Naive thymus-derived CD4-positive, alpha-beta T cell (primary cell): ENCODE measurements at regions of chr19 and their contacts with region 1.

Region 1: DNA sequence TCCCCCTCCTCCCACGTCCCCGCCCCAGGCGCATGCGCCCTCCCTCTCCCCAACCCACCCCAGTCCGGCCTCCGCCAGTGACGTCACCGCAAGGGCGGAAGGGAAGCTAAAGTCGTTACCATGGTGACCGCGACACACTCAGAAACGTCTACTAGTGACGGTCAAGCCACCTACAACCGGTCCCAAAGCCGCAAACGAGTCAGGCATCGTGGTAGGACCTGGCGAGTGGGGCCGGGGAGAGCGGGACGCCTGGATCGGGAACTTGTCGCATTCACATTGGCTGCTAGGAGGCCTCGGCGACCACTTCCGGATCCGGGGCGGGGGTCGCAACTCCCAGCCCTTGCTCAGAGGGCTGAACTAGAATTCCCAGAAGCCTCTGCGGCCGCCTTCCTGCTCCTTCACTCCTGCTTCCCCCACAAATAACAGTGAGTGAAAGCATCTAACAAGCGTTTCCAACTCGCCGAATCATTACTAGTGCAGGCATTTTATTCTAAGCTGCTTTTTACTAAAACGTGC is at the start of gene ZSCAN5A:
- DNase-seq: peak; percentile 93 to 99 (median 99)
- ATAC-seq: peak; percentile 85
- H3K4me3 ChIP-seq: peak within 1 kb of the TSS; percentile 86
- H3K4me3 Mint-ChIP-seq: peak within 1 kb of the TSS; percentile 79 to 100 (median 96)
- H3K27ac ChIP-seq: peak within 1 kb of the TSS; percentile 97
- H3K27ac Mint-ChIP-seq: peak within 1 kb of the TSS; percentile 95 to 100 (median 99)
- H3K4me1 ChIP-seq: peaks cover 4 to 10% of the 10 kb centered on the region in 2 donors
- H3K4me1 Mint-ChIP-seq: peaks cover 13 to 41% (median 26%) of the 10 kb centered on the region in 7 donors
- H3K27me3 ChIP-seq: no peaks in the 10 kb centered on the region
- H3K27me3 Mint-ChIP-seq: no peaks in the 10 kb centered on the region
- total RNA-seq, gene ZSCAN5A: 8.0 to 15.4 (median 11.8) TPM

Region 2: DNA sequence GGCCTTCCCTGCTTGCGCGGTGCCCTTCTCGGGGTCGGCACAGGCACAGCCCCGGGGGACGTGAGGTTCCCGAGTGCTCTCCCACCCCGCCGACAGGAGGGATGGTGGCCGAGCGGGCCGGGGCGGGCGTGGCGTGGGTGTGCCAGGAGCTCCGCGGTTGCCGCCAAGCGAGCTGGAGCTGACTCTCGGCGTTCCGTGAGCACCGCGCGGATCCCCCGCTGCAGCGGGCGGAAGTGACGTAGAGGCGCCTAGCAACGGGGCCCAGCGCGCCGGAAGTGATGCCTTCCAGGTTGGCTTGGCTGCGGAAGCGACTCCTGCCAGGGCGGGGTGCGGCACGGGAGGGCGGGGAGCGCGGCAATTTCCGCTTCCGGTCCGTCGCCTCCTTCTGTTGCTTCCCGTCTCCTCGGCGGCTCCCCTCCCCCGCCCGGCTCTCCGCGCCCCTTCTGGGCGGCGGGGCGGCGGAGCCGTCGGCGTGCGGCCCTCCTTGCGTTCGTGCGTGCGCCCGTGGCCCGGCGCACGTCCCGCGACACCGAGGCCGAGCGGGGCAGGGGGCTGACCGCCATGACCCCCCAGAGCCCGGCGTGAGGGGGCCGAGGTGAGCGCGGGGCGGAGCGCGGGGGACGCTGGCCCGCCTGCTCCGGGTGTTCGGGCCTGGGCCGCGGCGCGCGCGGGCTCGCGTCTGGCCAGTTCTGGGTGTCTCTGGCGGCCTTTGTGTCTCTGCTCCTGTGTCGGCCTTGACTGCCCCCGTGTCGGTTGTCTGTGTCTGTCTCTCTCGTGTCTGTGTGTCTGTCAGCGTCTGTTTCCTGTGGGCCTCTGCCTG is 639.6 kb before region 1 on chr19 and contains the start of gene EPN1:
- CTCF ChIA-PET with region 1: no interaction called
- POLR2A ChIA-PET with region 1: no interaction called
- intact Hi-C with region 1: loop called in 1 of 2 experiments (anchors 1 kb)
- DNase-seq: peak; percentile 88 to 98 (median 96)
- ATAC-seq: peak; percentile 93
- H3K4me3 ChIP-seq: peak within 1 kb of the TSS; percentile 72
- H3K4me3 Mint-ChIP-seq: peak within 1 kb of the TSS; percentile 89 to 99 (median 97)
- H3K27ac ChIP-seq: peak within 1 kb of the TSS; percentile 84
- H3K27ac Mint-ChIP-seq: peak within 1 kb of the TSS; percentile 90 to 99 (median 96)
- H3K4me1 ChIP-seq: peaks cover 26 to 28% of the 10 kb centered on the region in 2 donors
- H3K4me1 Mint-ChIP-seq: peaks cover 49 to 72% (median 58%) of the 10 kb centered on the region in 7 donors
- H3K27me3 ChIP-seq: no peaks in the 10 kb centered on the region
- H3K27me3 Mint-ChIP-seq: no peaks in the 10 kb centered on the region
- total RNA-seq, gene EPN1: 45.2 to 67.1 (median 52.2) TPM

Region 3: DNA sequence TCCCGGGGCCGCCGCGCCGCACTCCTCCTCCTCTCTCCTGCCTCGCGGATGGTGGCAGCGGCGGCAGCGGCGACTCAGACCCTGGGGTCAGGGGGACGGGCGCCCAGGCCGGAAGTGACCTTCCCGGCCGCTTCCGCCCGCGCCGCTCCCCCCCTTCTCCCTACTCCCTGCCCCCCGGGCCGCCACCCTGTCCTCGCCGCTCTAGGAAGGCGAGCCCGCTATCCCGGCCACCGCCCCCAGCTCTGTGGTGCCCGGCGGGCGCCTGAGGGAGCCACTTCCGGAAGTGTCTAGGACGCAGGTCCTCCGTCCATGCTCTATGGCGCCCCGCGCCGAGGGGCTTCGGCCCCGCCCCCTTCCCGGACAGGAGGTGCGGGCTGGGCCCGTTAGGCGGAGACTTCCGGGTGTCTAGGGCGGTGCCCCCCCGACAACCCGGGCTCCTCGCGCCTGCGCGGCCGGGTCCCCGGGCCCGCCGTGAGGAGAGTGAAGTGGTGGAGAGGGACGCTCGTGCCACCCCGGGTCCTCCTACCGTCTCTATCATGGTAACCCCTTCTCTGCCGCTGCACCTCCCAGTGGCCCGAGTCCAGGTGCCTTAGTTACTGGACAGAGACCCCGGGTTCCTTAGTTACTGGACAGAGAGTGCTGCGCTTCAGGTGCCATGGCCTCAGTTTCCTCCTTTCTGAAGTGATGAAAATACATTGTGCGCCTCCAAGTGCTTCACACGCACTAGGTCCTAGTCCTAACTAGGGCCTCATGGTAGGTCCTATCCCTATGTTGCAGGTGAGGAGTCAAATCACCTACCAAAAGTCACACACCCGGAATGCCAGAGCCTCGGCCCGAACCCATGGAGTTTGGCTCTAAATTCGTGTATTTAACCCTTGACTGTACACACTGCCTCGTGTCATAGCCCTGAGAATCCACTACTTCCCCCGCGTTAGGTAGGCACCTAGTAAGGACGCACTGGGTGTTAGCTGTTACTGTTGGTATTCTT is 193.1 kb before region 1 on chr19 and contains the start of gene ZNF787:
- CTCF ChIA-PET with region 1: no interaction called
- POLR2A ChIA-PET with region 1: interaction called, 3 read pairs
- intact Hi-C with region 1: loop called (anchors 1 kb)
- DNase-seq: peak; percentile 94 to 98 (median 98)
- ATAC-seq: peak; percentile 88
- H3K4me3 ChIP-seq: peak within 1 kb of the TSS; percentile 79
- H3K4me3 Mint-ChIP-seq: peak within 1 kb of the TSS; percentile 85 to 93 (median 88)
- H3K27ac ChIP-seq: peak within 1 kb of the TSS; percentile 97
- H3K27ac Mint-ChIP-seq: peak within 1 kb of the TSS; percentile 87 to 98 (median 95)
- H3K4me1 ChIP-seq: peaks cover 8 to 34% of the 10 kb centered on the region in 2 donors
- H3K4me1 Mint-ChIP-seq: peaks cover 17 to 72% (median 58%) of the 10 kb centered on the region in 7 donors
- H3K27me3 ChIP-seq: no peaks in the 10 kb centered on the region
- H3K27me3 Mint-ChIP-seq: no peaks in the 10 kb centered on the region
- total RNA-seq, gene ZNF787: 19.7 to 41.2 (median 33.0) TPM

Region 4: DNA sequence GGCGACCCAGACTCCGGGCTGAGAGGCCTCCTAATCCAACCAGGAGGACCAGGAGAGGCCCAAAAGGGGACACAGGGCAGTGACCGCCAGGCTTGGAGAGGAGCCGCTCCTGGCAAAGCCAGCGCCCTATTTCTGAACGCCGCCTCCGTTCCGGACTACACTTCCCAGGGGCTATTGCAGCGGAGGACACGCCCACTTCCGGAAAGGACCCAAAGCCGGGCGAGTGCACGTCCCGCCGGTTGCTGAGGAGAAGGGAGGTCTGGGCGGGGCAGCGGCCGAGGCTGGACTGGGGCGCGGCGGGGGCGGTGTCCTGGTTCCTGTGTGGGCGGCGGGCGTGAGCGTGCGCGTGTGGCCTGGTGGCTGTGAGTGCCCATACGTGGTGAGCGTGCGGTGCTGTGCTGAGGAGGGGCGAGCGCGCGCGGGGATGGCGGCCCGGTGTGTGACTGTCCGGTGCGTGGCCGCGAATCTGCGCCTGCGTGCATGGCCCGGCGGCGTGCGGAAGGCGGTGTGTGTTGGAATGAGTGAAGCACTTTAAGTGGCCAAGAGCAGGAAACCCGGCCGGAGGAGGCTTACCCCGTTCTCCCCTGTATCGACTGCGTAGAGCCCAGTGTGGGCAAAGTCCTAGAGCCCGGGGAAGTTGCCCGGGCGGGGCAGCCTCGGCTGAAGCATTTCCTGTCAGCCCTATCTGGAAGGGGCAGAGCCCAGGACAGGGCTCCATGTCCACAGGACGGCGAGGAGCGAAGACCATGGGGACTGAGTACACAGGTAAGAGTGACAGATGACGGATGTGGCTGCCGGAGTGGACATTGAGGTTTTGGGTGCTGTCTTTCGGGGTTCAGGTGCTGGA is 252.9 kb after region 1 on chr19 and contains the start of gene ZNF470:
- CTCF ChIA-PET with region 1: no interaction called
- POLR2A ChIA-PET with region 1: no interaction called
- intact Hi-C with region 1: loop called in 1 of 2 experiments (anchors 1 kb)
- DNase-seq: peak; percentile 73 to 86 (median 80)
- ATAC-seq: peak; percentile 98
- H3K4me3 ChIP-seq: peak within 1 kb of the TSS; percentile 86
- H3K4me3 Mint-ChIP-seq: peak within 1 kb of the TSS; percentile 89 to 98 (median 96)
- H3K27ac ChIP-seq: peak within 1 kb of the TSS; percentile 77
- H3K27ac Mint-ChIP-seq: peak within 1 kb of the TSS; percentile 59 to 91 (median 84)
- H3K4me1 ChIP-seq: peaks cover 0 to 9% of the 10 kb centered on the region in 2 donors
- H3K4me1 Mint-ChIP-seq: peaks cover 10 to 25% (median 13%) of the 10 kb centered on the region in 7 donors
- H3K27me3 ChIP-seq: no peaks in the 10 kb centered on the region
- H3K27me3 Mint-ChIP-seq: no peaks in the 10 kb centered on the region
- total RNA-seq, gene ZNF470: 0.98 to 5.9 (median 2.4) TPM